Naive thymus-derived CD4-positive, alpha-beta T cell (primary cell): ENCODE measurements at regions of chr6 and their contacts with region 1.

Region 1: DNA sequence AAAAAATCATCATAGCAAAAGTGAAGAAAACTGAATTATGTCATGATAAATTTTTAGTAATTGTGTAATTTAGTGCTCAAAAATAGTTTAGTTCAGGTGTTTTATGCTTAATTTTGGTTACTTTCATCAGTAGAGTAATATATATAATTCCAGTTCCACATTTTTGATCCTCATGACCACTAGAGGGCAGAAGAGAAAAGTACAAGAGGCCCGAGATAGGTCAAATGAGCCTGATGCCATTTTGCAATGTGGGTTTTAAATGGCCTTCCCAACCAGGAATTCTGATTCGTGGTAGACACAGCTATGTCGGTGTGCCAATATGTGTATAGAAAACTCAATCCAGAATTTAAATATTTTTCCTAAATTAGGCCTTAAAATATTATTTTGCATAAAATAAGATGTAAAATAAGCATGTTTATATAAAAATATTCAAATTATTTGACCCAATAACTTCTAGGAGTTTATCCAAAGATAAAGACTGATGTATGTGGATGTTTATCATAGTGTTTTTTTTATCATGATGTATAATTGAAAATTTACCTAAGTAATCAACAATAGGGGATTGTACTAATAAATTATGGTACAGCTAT is 159.7 kb upstream of the RPS6KA2 start:
- DNase-seq: peak in 7 of 9 donors; percentile 42 to 70 (median 59)
- ATAC-seq: peak; percentile 78
- H3K4me3 ChIP-seq: no peak overlapping the region
- H3K4me3 Mint-ChIP-seq: no peak overlapping the region
- H3K27ac ChIP-seq: no peak overlapping the region
- H3K27ac Mint-ChIP-seq: no peak overlapping the region
- H3K4me1 ChIP-seq: no peaks in the 10 kb centered on the region
- H3K4me1 Mint-ChIP-seq: no peaks in the 10 kb centered on the region
- H3K27me3 ChIP-seq: no peaks in the 10 kb centered on the region
- H3K27me3 Mint-ChIP-seq: peaks cover 0 to 13% (median 0%) of the 10 kb centered on the region in 5 donors

Region 2: GRCh38 chr6:166515072-166515810 is 271.6 kb before region 1 on chr6:
- CTCF ChIA-PET with region 1: no interaction called
- POLR2A ChIA-PET with region 1: no interaction called
- intact Hi-C with region 1: no loop called
- DNase-seq: no peak
- ATAC-seq: peak; percentile 33
- H3K4me3 ChIP-seq: no peak overlapping the region
- H3K4me3 Mint-ChIP-seq: no peak overlapping the region
- H3K27ac ChIP-seq: no peak overlapping the region
- H3K27ac Mint-ChIP-seq: peak overlapping the region in 1 of 9 donors; percentile 71
- H3K4me1 ChIP-seq: peaks cover 0 to 4% of the 10 kb centered on the region in 2 donors
- H3K4me1 Mint-ChIP-seq: peaks cover 0 to 10% (median 6%) of the 10 kb centered on the region in 7 donors
- H3K27me3 ChIP-seq: no peaks in the 10 kb centered on the region
- H3K27me3 Mint-ChIP-seq: no peaks in the 10 kb centered on the region

Region 3: GRCh38 chr6:166950443-166950821 is 163.6 kb after region 1 on chr6:
- CTCF ChIA-PET with region 1: interaction called, 7 read pairs
- POLR2A ChIA-PET with region 1: interaction called, 3 read pairs
- intact Hi-C with region 1: loop called (anchors 1 to 2 kb)
- DNase-seq: peak in 1 of 9 donors; percentile 31
- ATAC-seq: peak; percentile 12
- H3K4me3 ChIP-seq: peak overlapping the region; percentile 45
- H3K4me3 Mint-ChIP-seq: peak overlapping the region; percentile 51 to 95 (median 84)
- H3K27ac ChIP-seq: peak overlapping the region; percentile 92
- H3K27ac Mint-ChIP-seq: peak overlapping the region; percentile 91 to 99 (median 98)
- H3K4me1 ChIP-seq: peaks cover 28 to 63% of the 10 kb centered on the region in 2 donors
- H3K4me1 Mint-ChIP-seq: peaks cover 42 to 67% (median 64%) of the 10 kb centered on the region in 7 donors
- H3K27me3 ChIP-seq: no peaks in the 10 kb centered on the region
- H3K27me3 Mint-ChIP-seq: no peaks in the 10 kb centered on the region

Region 4: DNA sequence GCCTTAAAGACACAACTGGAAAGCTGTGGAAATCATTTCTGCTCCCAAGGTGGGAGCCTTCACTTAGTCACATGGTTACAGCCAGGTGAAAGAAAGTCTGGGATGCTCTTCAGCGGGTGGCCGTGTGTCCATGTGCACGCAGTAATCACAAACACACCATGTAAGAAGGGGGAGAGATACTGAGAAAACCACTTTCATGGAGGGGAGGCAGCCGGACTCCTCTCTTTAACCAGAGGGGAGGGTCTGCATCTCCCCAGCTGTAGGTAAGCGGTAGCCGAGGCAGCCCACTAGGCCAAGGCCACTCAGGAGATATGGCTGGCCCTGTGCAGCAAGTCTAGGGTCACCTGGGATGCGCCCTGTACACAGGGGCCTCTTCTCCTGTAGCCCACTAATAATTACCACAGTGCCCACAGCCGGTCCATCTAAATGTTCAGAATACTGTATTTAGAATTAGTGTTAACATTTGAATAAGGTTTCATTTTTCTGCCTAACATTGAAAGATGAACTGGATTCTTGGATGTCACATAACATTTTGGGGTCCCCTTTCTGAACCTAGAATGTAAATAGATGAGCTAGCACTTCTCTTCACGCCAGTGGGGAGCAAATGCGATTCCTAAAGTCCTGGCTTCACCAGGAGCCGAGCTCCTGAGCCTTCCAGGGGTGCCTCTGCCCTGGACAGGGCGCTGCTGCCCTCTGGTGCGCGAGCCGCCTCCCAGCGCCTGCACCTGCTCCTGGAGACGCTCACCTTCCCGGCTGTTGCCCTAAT is 355.1 kb after region 1 on chr6:
- CTCF ChIA-PET with region 1: interaction called, 4 read pairs
- POLR2A ChIA-PET with region 1: no interaction called
- intact Hi-C with region 1: loop called in 1 of 2 experiments (anchors 1 kb)
- DNase-seq: peak; percentile 9 to 54 (median 41)
- ATAC-seq: peak; percentile 84
- H3K4me3 ChIP-seq: no peak overlapping the region
- H3K4me3 Mint-ChIP-seq: no peak overlapping the region
- H3K27ac ChIP-seq: no peak overlapping the region
- H3K27ac Mint-ChIP-seq: no peak overlapping the region
- H3K4me1 ChIP-seq: peaks cover 0 to 4% of the 10 kb centered on the region in 2 donors
- H3K4me1 Mint-ChIP-seq: peaks cover 0 to 6% (median 0%) of the 10 kb centered on the region in 7 donors
- H3K27me3 ChIP-seq: no peaks in the 10 kb centered on the region
- H3K27me3 Mint-ChIP-seq: peaks cover 0 to 21% (median 12%) of the 10 kb centered on the region in 5 donors